ENCODE measurements at regions of chr11 and their contacts with region 1.

Region 1: GRCh38 chr11:12411806-12412727 is 34.7 kb downstream of the PARVA start:
- DNase-seq: peak; percentile 35 to 57 (median 43)
- H3K4me3 ChIP-seq: no peak overlapping the region
- H3K27ac ChIP-seq: no peak overlapping the region
- H3K4me1 ChIP-seq: no peaks in the 10 kb centered on the region
- H3K27me3 ChIP-seq: peaks cover 0 to 23% (median 7%) of the 10 kb centered on the region in 5 experiments

Region 2: DNA sequence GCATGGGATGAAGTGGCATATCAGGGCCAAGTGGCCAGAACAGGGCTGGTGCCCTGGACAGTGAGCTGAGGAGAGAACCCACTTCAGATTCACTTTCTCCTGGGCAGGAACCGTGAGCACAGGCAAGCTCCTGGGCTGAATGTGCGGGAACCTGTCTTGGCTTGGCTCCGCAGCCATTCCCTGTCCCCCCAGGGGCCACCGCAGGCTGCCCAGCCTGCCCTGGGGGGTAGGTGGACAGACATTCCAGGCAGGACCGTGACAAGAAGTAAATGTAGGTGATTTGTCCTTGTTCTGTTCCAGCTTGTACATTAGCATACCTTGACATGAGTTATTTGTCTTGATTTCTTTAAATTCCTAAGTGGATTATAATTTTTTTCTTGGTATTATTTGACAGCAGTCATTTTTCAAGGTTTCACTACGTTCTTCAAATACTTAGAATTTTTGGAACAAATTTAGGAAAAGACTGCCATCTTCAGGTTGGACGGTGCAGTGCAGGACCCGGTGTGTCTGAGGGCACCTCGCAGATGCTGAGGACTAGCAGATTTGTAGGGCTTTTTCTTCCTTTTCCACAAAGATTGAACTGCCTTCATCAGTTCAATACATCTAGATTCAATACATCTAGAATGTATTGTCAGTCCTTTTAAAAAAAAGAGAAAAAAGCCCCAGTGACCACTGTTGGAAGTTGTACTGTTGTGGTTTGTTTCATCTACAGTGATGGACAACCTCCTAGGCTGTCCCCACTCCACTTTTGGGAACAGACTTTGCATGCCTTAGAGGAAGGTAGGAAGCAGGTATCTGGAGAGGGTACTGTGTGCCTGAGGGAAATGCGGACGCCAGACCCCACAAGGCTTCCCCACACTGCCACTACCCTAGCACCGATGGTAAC is 482.0 kb after region 1 on chr11:
- CTCF ChIA-PET with region 1: interaction called, 16 read pairs
- POLR2A ChIA-PET with region 1: no interaction called
- DNase-seq: peak; percentile 27 to 62 (median 51)
- H3K4me3 ChIP-seq: no peak overlapping the region
- H3K27ac ChIP-seq: no peak overlapping the region
- H3K4me1 ChIP-seq: no peaks in the 10 kb centered on the region
- H3K27me3 ChIP-seq: peaks cover 3 to 30% (median 17%) of the 10 kb centered on the region in 5 experiments